Endothelial cell of umbilical vein (primary cell): ENCODE measurements at regions of chr11 and their contacts with region 1.

Region 1: GRCh38 chr11:109853156-109853776 is 239.9 kb upstream of the ZC3H12C start:
- DNase-seq: peak; percentile 90
- H3K4me3 ChIP-seq: no peak overlapping the region
- H3K27ac ChIP-seq: no peak overlapping the region
- H3K4me1 ChIP-seq: no peaks in the 10 kb centered on the region
- H3K27me3 ChIP-seq: peaks cover 0 to 1% of the 10 kb centered on the region in 2 experiments
- CTCF ChIP-seq: peak; percentile 48 to 53
- POLR2A ChIP-seq: no peak

Region 2: GRCh38 chr11:108697872-108698473 is 1155.3 kb before region 1 on chr11:
- CTCF ChIA-PET with region 1: interaction called, 9 read pairs
- POLR2A ChIA-PET with region 1: no interaction called
- dilution Hi-C with region 1: no loop called
- intact Hi-C with region 1: loop called (anchors 2 kb)
- DNase-seq: peak; percentile 78
- H3K4me3 ChIP-seq: no peak overlapping the region
- H3K27ac ChIP-seq: no peak overlapping the region
- H3K4me1 ChIP-seq: no peaks in the 10 kb centered on the region
- H3K27me3 ChIP-seq: no peaks in the 10 kb centered on the region
- CTCF ChIP-seq: peak; percentile 78 to 79
- POLR2A ChIP-seq: no peak

Region 3: GRCh38 chr11:109865548-109866186 is 12.4 kb after region 1 on chr11:
- CTCF ChIA-PET with region 1: interaction called, 14 read pairs
- POLR2A ChIA-PET with region 1: no interaction called
- dilution Hi-C with region 1: no loop called
- intact Hi-C with region 1: loop called (anchors 1 kb)
- DNase-seq: no peak
- H3K4me3 ChIP-seq: no peak overlapping the region
- H3K27ac ChIP-seq: no peak overlapping the region
- H3K4me1 ChIP-seq: peaks cover 23% of the 10 kb centered on the region
- H3K27me3 ChIP-seq: no peaks in the 10 kb centered on the region
- CTCF ChIP-seq: no peak
- POLR2A ChIP-seq: no peak

Region 4: GRCh38 chr11:109914809-109915653 is 61.8 kb after region 1 on chr11:
- CTCF ChIA-PET with region 1: interaction called, 11 read pairs
- POLR2A ChIA-PET with region 1: no interaction called
- dilution Hi-C with region 1: no loop called
- intact Hi-C with region 1: no loop called
- DNase-seq: peak; percentile 94
- H3K4me3 ChIP-seq: peak overlapping the region in 1 of 3 experiments; percentile 40
- H3K27ac ChIP-seq: peak overlapping the region; percentile 94
- H3K4me1 ChIP-seq: peaks cover 23% of the 10 kb centered on the region
- H3K27me3 ChIP-seq: no peaks in the 10 kb centered on the region
- CTCF ChIP-seq: no peak
- POLR2A ChIP-seq: peak; percentile 35

Region 5: GRCh38 chr11:109933126-109933525 is 79.9 kb after region 1 on chr11:
- CTCF ChIA-PET with region 1: interaction called, 37 read pairs
- POLR2A ChIA-PET with region 1: no interaction called
- dilution Hi-C with region 1: no loop called
- intact Hi-C with region 1: no loop called
- DNase-seq: no peak
- H3K4me3 ChIP-seq: no peak overlapping the region
- H3K27ac ChIP-seq: no peak overlapping the region
- H3K4me1 ChIP-seq: no peaks in the 10 kb centered on the region
- H3K27me3 ChIP-seq: peaks cover 0 to 3% of the 10 kb centered on the region in 2 experiments
- CTCF ChIP-seq: no peak
- POLR2A ChIP-seq: no peak

Region 6: DNA sequence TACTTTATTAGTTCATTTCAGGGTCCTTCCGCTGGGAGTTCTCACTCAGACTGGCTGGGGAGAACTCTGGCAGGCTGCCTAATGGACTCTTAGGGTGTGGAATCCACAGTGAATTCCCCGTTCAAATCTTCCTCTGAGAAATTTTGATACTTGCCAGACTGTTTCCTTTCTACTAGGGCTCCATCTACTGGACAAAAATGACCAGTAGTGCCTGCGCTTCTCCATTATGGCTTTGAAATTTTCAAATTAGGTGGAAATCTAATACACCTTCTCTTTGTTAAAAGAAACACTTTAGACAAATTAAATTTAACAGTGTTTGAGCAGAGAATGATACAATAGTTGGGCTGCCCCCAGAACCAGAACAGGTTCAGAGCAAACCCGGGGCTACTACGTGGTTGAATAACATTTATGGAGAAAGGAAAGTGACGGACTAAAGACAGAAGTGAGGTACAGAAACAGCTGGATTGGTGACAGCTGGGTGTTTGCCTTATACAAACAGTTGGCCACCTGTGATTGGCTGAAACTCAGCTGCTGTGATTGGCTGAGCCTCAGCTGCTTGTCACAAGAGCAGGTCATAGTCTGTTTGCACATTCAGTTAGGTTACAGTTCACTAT is 523.6 kb after region 1 on chr11:
- CTCF ChIA-PET with region 1: interaction called, 3 read pairs
- POLR2A ChIA-PET with region 1: no interaction called
- dilution Hi-C with region 1: no loop called
- intact Hi-C with region 1: loop called (anchors 1 kb)
- DNase-seq: peak; percentile 93
- H3K4me3 ChIP-seq: no peak overlapping the region
- H3K27ac ChIP-seq: no peak overlapping the region
- H3K4me1 ChIP-seq: peaks cover 24% of the 10 kb centered on the region
- H3K27me3 ChIP-seq: no peaks in the 10 kb centered on the region
- CTCF ChIP-seq: peak; percentile 52 to 72
- POLR2A ChIP-seq: no peak

Region 7: DNA sequence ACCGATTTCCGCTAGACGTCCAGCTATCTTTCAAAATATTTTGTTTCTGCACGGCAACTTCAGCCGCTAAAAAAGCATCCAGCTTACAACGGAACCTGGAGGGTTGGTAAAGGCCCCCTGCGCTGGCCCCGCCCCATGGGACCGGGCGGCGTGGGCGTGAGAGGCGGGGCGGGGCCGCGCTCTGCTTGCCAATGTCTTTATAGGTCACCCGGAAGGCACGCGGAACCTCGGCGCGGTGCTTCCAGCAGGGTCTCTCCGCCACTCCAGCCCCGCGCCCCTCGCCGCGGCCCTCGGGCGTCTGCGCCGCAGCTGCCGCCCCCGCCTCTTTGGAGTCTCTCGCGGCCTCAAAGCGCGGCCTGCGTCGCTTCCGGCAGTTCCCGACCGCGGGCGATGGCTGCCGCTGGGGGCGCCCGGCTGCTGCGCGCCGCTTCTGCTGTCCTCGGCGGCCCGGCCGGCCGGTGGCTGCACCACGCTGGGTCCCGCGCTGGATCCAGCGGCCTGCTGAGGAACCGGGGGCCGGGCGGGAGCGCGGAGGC is 576.5 kb after region 1 on chr11 and contains the start of gene FDX1:
- CTCF ChIA-PET with region 1: interaction called, 12 read pairs
- POLR2A ChIA-PET with region 1: no interaction called
- dilution Hi-C with region 1: no loop called
- intact Hi-C with region 1: loop called (anchors 2 kb)
- DNase-seq: peak; percentile 84
- H3K4me3 ChIP-seq: peak within 1 kb of the TSS; percentile 23 to 75 (median 57)
- H3K27ac ChIP-seq: peak within 1 kb of the TSS; percentile 72
- H3K4me1 ChIP-seq: peaks cover 27% of the 10 kb centered on the region
- H3K27me3 ChIP-seq: no peaks in the 10 kb centered on the region
- CTCF ChIP-seq: peak; percentile 50 to 59
- POLR2A ChIP-seq: no peak
- total RNA-seq, gene FDX1: 9.9 and 11.0 TPM in 2 replicates